CD4-positive, alpha-beta memory T cell (primary cell): ENCODE measurements at regions of chr20 and their contacts with region 1.

Region 1: GRCh38 chr20:5100684-5101347 is 18.9 kb downstream of the PCNA start:
- DNase-seq: peak; percentile 63 to 69 (median 68)
- H3K4me3 ChIP-seq: no peak overlapping the region
- H3K4me3 Mint-ChIP-seq: no peak overlapping the region
- H3K27ac ChIP-seq: no peak overlapping the region
- H3K27ac Mint-ChIP-seq: peak overlapping the region; percentile 45 to 89 (median 76)
- H3K4me1 ChIP-seq: no peaks in the 10 kb centered on the region
- H3K4me1 Mint-ChIP-seq: peaks cover 7 to 18% (median 15%) of the 10 kb centered on the region in 4 donors
- H3K27me3 ChIP-seq: no peaks in the 10 kb centered on the region
- H3K27me3 Mint-ChIP-seq: no peaks in the 10 kb centered on the region

Region 2: GRCh38 chr20:4483486-4483885 is 617.3 kb before region 1 on chr20:
- CTCF ChIA-PET with region 1: no interaction called
- POLR2A ChIA-PET with region 1: no interaction called
- intact Hi-C with region 1: no loop called
- DNase-seq: no peak
- H3K4me3 ChIP-seq: no peak overlapping the region
- H3K4me3 Mint-ChIP-seq: no peak overlapping the region
- H3K27ac ChIP-seq: no peak overlapping the region
- H3K27ac Mint-ChIP-seq: no peak overlapping the region
- H3K4me1 ChIP-seq: no peaks in the 10 kb centered on the region
- H3K4me1 Mint-ChIP-seq: no peaks in the 10 kb centered on the region
- H3K27me3 ChIP-seq: peaks cover 5% of the 10 kb centered on the region
- H3K27me3 Mint-ChIP-seq: peaks cover 19 to 20% of the 10 kb centered on the region in 2 donors

Region 3: DNA sequence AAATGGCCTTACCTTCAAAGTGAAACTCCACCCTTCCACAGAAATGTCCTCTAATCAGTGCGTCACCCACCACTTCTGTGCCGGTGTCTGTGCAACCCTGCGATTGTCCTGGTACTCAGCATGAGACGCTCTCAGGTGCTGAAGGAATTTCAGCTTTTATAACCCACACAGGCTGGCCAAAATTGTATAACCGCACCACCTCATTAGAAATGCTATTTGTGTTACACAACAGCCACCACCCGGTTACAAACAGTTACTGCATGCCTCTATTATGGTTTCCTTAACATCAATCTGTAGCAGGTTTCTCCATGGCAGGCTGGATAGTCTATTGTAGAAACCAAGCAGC is 151.0 kb before region 1 on chr20:
- CTCF ChIA-PET with region 1: interaction called, 30 read pairs
- POLR2A ChIA-PET with region 1: no interaction called
- intact Hi-C with region 1: no loop called
- DNase-seq: peak; percentile 32 to 53 (median 42)
- H3K4me3 ChIP-seq: peak overlapping the region in 1 of 2 donors; percentile 20
- H3K4me3 Mint-ChIP-seq: peak overlapping the region; percentile 70 to 84 (median 79)
- H3K27ac ChIP-seq: no peak overlapping the region
- H3K27ac Mint-ChIP-seq: peak overlapping the region; percentile 8 to 94 (median 47)
- H3K4me1 ChIP-seq: peaks cover 6% of the 10 kb centered on the region
- H3K4me1 Mint-ChIP-seq: peaks cover 8 to 26% (median 14%) of the 10 kb centered on the region in 4 donors
- H3K27me3 ChIP-seq: no peaks in the 10 kb centered on the region
- H3K27me3 Mint-ChIP-seq: no peaks in the 10 kb centered on the region

Region 4: GRCh38 chr20:5001174-5002076 is 99.4 kb before region 1 on chr20 and contains the start of gene SLC23A2:
- CTCF ChIA-PET with region 1: interaction called, 7 read pairs
- POLR2A ChIA-PET with region 1: no interaction called
- intact Hi-C with region 1: loop called (anchors 2 kb)
- DNase-seq: peak; percentile 50 to 65 (median 58)
- H3K4me3 ChIP-seq: peak within 1 kb of the TSS; percentile 71 to 87
- H3K4me3 Mint-ChIP-seq: peak within 1 kb of the TSS; percentile 91 to 100 (median 94)
- H3K27ac ChIP-seq: peak within 1 kb of the TSS; percentile 56
- H3K27ac Mint-ChIP-seq: peak within 1 kb of the TSS; percentile 87 to 94 (median 93)
- H3K4me1 ChIP-seq: peaks cover 33% of the 10 kb centered on the region
- H3K4me1 Mint-ChIP-seq: peaks cover 30 to 47% (median 36%) of the 10 kb centered on the region in 4 donors
- H3K27me3 ChIP-seq: no peaks in the 10 kb centered on the region
- H3K27me3 Mint-ChIP-seq: no peaks in the 10 kb centered on the region
- total RNA-seq, gene SLC23A2: 22.3 to 22.6 TPM

Region 5: GRCh38 chr20:5056801-5057599 is 43.8 kb before region 1 on chr20:
- CTCF ChIA-PET with region 1: interaction called, 111 read pairs
- POLR2A ChIA-PET with region 1: interaction called, 6 read pairs
- intact Hi-C with region 1: no loop called
- DNase-seq: peak; percentile 69 to 78 (median 73)
- H3K4me3 ChIP-seq: no peak overlapping the region
- H3K4me3 Mint-ChIP-seq: peak overlapping the region in 7 of 8 donors; percentile 6 to 69 (median 46)
- H3K27ac ChIP-seq: no peak overlapping the region
- H3K27ac Mint-ChIP-seq: peak overlapping the region; percentile 48 to 96 (median 81)
- H3K4me1 ChIP-seq: peaks cover 19% of the 10 kb centered on the region
- H3K4me1 Mint-ChIP-seq: peaks cover 13 to 24% (median 20%) of the 10 kb centered on the region in 4 donors
- H3K27me3 ChIP-seq: no peaks in the 10 kb centered on the region
- H3K27me3 Mint-ChIP-seq: no peaks in the 10 kb centered on the region

Region 6: DNA sequence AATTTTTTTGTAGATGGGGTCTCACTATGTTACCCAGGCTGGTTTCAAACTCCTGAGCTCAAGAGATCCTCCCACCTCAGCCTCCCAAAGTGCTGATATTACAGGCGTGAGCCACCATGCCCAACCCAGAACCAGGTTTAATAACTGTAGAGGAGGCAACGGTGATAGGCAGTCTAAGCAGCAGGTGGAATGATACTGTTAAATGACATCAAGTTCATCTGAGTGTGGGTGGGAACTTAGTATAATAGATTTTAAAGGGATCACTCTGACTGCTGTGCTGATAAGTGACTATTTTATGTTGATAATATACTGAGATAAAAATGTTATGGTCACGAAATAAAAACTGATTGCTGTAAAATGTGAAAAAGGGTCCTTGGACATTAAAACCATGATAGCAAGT is 12.1 kb before region 1 on chr20:
- CTCF ChIA-PET with region 1: interaction called, 17 read pairs
- POLR2A ChIA-PET with region 1: interaction called, 4 read pairs
- intact Hi-C with region 1: no loop called
- DNase-seq: no peak
- H3K4me3 ChIP-seq: no peak overlapping the region
- H3K4me3 Mint-ChIP-seq: no peak overlapping the region
- H3K27ac ChIP-seq: no peak overlapping the region
- H3K27ac Mint-ChIP-seq: peak overlapping the region in 3 of 7 donors; percentile 25 to 42 (median 35)
- H3K4me1 ChIP-seq: peaks cover 10% of the 10 kb centered on the region
- H3K4me1 Mint-ChIP-seq: peaks cover 8 to 18% (median 10%) of the 10 kb centered on the region in 4 donors
- H3K27me3 ChIP-seq: no peaks in the 10 kb centered on the region
- H3K27me3 Mint-ChIP-seq: no peaks in the 10 kb centered on the region

Region 7: DNA sequence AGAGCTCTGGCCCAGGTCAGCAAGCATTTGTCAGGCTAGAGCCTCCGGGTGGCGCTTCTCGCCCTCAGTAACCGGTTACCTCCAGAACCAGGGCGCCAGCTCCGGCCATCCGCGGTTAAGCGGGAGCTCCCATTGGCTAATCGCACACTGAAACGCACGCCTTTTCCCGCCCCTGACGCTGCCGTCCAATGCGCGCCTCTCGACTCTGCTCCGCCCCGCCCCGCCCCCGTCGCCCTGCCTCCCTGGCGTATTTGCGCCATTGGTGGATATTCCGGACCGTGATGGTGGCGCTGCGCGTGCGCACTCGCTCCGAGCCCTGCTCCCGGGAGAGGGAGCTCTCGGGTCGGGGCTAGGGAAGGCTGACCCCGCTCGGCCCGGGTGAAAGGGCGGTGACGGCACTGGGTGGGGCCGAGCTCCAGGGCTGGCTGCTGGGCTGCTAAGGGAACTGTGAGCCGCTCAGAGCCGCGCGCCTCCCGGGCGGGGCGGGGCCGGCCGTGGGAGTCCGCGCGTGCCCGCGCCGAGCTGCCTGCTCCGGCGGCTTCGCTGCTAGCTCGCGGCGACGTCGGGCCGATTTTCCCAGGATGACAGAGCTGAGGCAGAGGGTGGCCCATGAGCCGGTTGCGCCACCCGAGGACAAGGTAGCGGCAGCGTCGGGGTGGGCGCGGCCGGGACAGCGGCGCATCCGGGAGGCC is 25.8 kb after region 1 on chr20 and contains the start of gene CDS2:
- CTCF ChIA-PET with region 1: interaction called, 10 read pairs
- POLR2A ChIA-PET with region 1: interaction called, 3 read pairs
- intact Hi-C with region 1: no loop called
- DNase-seq: peak; percentile 99 to 100 (median 99)
- H3K4me3 ChIP-seq: peak within 1 kb of the TSS; percentile 72 to 82
- H3K4me3 Mint-ChIP-seq: peak within 1 kb of the TSS; percentile 88 to 97 (median 92)
- H3K27ac ChIP-seq: peak within 1 kb of the TSS; percentile 99
- H3K27ac Mint-ChIP-seq: peak within 1 kb of the TSS; percentile 87 to 99 (median 97)
- H3K4me1 ChIP-seq: peaks cover 31% of the 10 kb centered on the region
- H3K4me1 Mint-ChIP-seq: peaks cover 27 to 38% (median 31%) of the 10 kb centered on the region in 4 donors
- H3K27me3 ChIP-seq: no peaks in the 10 kb centered on the region
- H3K27me3 Mint-ChIP-seq: no peaks in the 10 kb centered on the region
- total RNA-seq, gene CDS2: 59.4 to 59.8 TPM

Region 8: GRCh38 chr20:5146871-5147592 is 46.2 kb after region 1 on chr20:
- CTCF ChIA-PET with region 1: no interaction called
- POLR2A ChIA-PET with region 1: no interaction called
- intact Hi-C with region 1: no loop called
- DNase-seq: no peak
- H3K4me3 ChIP-seq: no peak overlapping the region
- H3K4me3 Mint-ChIP-seq: no peak overlapping the region
- H3K27ac ChIP-seq: no peak overlapping the region
- H3K27ac Mint-ChIP-seq: peak overlapping the region in 4 of 7 donors; percentile 12 to 50 (median 36)
- H3K4me1 ChIP-seq: peaks cover 30% of the 10 kb centered on the region
- H3K4me1 Mint-ChIP-seq: peaks cover 40 to 81% (median 57%) of the 10 kb centered on the region in 4 donors
- H3K27me3 ChIP-seq: no peaks in the 10 kb centered on the region
- H3K27me3 Mint-ChIP-seq: no peaks in the 10 kb centered on the region